ENCODE measurements at regions of chr12 and their contacts with region 1.

Region 1: GRCh38 chr12:120866108-120866507 is 38.0 kb downstream of the SPPL3 start:
- DNase-seq: no peak
- H3K4me3 ChIP-seq: no peak overlapping the region
- H3K27ac ChIP-seq: no peak overlapping the region
- H3K27me3 ChIP-seq: no peaks in the 10 kb centered on the region
- CTCF ChIP-seq: no peak

Region 2: DNA sequence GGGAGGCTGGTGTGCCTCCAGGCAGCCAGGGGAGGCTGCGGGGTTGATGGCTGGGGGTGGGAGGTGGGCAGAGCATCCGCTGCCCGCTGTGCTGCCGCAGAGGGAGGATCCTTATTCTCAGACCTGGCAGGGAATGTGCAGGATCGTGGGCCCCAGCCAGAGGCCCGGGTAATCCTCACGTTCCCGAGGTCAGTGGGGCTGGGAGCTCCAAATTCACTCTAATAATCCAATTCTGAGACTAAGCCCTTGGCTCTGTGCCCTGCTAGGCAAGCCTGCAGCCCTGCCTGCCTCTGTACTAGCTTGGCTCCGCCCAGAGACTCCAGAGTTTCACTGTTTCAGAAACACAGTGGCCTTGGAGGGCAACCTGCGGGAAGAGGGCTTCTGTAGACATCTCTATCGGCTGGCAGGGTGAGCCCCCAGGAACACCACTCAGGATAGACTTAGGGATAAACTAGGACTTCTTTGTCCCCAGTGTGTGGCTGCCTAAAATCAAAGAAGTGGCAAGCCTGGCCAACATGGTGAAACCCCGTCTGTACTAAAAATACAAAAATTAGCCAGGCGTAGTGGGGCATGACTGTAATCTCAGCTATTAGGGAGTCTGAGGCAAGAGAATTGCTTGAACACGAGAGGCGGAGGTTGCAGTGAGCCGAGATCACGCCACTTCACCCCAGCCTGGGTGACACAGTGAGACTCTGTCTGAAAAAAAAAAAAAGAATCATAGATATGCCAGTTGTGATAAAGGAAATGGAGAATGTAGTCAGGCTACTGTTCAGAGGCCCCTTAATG is 196.9 kb before region 1 on chr12:
- intact Hi-C with region 1: no loop called
- DNase-seq: peak in 1 of 10 donors; percentile 38
- H3K4me3 ChIP-seq: peak overlapping the region in 7 of 59 donors; percentile 12 to 33 (median 24)
- H3K27ac ChIP-seq: peak overlapping the region in 31 of 59 donors; percentile 1 to 69 (median 48)
- H3K27me3 ChIP-seq: no peaks in the 10 kb centered on the region
- CTCF ChIP-seq: no peak

Region 3: GRCh38 chr12:120886199-120887018 is 20.3 kb after region 1 on chr12:
- intact Hi-C with region 1: no loop called
- DNase-seq: no peak
- H3K4me3 ChIP-seq: no peak overlapping the region
- H3K27ac ChIP-seq: peak overlapping the region in 1 of 59 donors; percentile 13
- H3K27me3 ChIP-seq: no peaks in the 10 kb centered on the region
- CTCF ChIP-seq: no peak

Region 4: GRCh38 chr12:120961604-120962531 is 95.8 kb after region 1 on chr12:
- intact Hi-C with region 1: loop called (anchors 10 kb)
- DNase-seq: no peak
- H3K4me3 ChIP-seq: no peak overlapping the region
- H3K27ac ChIP-seq: no peak overlapping the region
- H3K27me3 ChIP-seq: no peaks in the 10 kb centered on the region
- CTCF ChIP-seq: no peak

Measured in dorsolateral prefrontal cortex (tissue), 120 donors.